ENCODE measurements at regions of chr14 and their contacts with region 1.

Region 1: DNA sequence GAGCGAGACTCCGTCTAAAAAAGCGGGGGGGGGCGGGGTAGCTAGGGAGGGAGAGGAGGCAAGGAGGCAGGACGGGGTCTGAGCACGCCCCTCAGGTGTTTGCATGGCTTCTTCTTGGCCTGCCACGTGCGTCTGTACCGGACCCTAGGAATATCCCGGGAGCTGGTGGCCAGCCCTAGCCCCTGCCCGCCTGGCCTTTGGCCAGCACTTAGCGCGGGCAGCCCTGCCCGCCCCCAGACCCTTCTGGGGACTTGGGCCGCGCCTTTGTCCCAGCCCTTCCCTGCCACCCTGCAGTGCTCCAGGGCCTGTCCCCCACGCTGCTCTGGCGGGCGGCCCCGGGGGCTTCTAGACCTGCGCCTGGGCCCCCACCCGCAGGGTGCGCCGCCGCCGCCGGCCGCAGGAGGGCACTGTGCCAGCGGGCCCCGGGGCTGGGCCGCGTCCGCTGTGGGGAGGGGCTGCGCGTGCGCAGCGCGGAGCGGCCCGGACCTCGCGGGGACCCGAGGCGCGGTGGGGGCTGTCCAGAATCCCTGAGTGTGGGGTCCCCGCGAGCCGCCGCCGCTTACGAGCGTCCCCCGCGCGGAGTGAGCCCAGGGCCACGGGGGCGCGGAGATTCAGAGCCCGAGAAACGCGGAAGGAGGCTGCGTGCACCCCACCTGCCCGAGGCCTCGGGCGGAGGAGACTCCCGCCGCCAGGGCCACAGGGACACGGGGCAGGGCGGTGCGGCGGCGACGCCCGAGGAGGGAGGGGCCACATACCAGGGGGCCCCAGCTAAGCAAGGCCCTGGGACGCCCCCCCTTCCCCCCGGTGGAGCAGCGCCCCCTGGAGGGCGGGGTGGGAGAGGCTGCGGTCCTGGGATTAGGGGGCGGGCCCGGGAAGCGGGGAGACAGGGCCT is 21.0 kb downstream of the SLC25A29 start:
- DNase-seq: peak; percentile 80
- ATAC-seq: peak; percentile 89
- H3K4me3 Mint-ChIP-seq: peak overlapping the region; percentile 78
- H3K27ac Mint-ChIP-seq: peak overlapping the region; percentile 72
- H3K4me1 Mint-ChIP-seq: peaks cover 22% of the 10 kb centered on the region
- H3K27me3 Mint-ChIP-seq: no peaks in the 10 kb centered on the region

Region 2: DNA sequence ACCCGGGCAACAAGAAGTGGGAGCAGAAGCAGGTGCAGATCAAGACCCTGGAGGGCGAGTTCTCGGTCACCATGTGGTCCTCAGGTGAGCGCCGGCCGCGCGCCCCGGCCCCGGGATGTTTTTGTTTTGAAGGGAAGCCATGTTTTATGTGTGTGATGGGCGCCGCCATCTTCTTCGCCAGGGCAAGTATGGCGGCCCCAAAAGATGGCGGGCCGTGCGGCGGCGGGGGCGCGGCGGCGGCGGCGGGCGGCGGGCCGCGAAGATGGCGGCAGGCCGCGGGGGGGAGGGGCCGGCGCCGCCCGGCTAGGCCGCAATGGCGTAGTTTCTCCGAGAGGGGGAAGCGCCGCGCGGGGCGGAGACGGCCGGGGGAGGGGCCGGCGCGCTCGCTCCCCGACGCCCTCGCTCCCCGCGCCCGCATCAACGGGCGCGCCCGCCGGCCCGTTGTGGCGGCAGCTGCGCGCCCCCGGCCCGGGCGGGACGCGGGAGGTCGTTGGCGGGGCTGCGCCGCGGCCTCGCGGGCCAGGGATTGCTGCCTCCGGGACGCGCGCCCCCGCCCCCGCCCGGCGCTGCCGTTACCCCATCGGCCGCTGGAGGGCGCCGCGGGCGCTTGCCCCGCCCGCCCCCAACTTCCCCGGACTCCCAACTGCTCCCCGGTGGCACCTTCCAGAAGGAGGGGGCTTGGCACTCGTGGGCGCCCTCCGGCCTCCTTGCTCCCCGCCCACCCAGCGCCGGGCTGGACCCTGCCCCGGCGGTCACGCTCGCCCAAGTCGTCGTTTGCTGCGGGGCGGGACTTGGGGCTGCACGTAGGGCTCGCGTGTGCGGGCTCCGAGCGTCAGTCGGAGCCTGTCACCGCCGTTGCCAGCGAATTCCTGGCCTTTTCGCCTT is 45.2 kb before region 1 on chr14:
- CTCF ChIA-PET with region 1: interaction called, 13 read pairs
- POLR2A ChIA-PET with region 1: no interaction called
- DNase-seq: peak; percentile 85
- ATAC-seq: peak; percentile 43
- H3K4me3 Mint-ChIP-seq: peak overlapping the region; percentile 93
- H3K27ac Mint-ChIP-seq: peak overlapping the region; percentile 89
- H3K4me1 Mint-ChIP-seq: peaks cover 48% of the 10 kb centered on the region
- H3K27me3 Mint-ChIP-seq: no peaks in the 10 kb centered on the region

Region 3: DNA sequence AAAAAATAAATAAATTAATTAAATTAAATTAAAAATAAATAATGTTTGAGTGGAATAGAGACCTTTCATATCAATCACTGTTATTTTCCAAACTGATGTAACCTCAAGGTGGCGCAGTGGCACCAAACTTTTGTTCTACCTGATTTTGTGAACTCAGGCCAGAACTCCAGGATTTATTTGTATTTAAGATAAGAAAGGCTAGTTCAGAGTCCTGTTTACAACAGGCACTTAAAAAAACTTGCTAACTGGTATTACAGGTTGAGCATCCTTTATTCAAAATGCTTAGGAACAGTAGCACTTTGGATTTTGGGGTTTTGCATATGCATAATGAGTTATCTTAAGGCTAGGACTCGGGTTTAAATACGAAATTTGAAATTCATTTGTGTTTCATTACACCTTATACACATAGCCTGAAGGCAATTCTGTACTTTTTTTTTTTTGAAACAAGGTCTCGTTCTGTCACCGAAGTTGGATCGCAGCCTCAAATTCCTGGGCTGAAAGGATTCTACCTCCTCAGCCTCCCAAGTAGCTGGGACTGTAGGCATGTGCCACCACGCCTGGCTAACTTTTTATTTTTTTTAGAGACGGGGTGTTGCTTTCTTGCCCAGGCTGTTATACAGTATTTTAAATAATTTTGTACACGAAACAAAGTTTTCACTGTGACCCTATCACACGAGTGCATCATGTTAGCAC is 13.9 kb before region 1 on chr14:
- CTCF ChIA-PET with region 1: interaction called, 31 read pairs
- POLR2A ChIA-PET with region 1: no interaction called
- DNase-seq: no peak
- ATAC-seq: no peak
- H3K4me3 Mint-ChIP-seq: no peak overlapping the region
- H3K27ac Mint-ChIP-seq: no peak overlapping the region
- H3K4me1 Mint-ChIP-seq: peaks cover 21% of the 10 kb centered on the region
- H3K27me3 Mint-ChIP-seq: no peaks in the 10 kb centered on the region

Region 4: DNA sequence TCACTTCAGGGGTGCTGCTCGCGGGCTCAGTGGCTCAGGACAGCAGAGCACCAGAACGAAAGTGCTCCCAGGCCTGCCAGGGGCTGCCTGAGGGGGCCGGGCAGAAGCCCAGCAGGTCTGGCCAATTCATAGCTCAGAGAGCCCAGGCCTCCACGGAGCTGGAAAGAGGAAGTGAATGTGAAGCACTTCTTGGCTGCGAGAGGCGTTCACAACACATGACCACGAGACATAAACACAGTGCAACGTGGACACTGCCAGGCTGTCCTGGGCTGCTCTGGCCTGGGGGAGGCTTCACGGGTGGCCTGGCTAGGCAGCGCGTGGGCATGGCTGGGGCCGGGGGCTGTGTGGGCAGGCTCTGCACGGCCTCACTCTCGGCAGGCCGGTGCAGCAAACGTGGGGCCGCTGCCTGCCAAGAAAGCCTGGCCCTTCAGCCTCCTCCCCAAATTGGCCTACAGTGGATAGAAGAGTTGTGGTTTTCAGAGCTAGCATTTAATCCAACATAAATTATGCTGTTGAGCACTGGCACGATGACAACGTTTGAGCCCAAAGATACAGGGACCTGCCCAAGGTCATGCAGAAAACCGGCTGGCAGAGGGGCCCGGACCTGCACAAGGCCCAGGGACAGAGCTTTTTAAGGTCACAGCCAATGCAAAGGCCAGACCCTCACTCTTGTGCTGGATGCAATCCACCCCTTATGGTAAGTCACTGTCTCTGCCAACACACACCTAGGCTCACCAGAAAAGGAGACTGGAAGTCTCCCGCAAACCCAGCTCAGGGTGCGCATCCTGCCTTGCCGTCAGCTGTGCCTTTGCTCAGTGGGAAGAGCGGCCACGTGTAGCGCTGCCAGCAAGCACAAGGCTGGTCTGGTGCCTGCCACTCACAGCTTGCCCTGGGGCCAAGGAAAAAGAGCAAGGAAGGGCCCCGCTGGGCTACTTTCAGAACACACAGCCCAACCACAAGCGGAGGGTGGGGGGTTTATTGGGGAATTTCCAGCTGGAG is 12.3 kb after region 1 on chr14:
- CTCF ChIA-PET with region 1: interaction called, 33 read pairs
- POLR2A ChIA-PET with region 1: interaction called, 3 read pairs
- DNase-seq: no peak
- ATAC-seq: no peak
- H3K4me3 Mint-ChIP-seq: no peak overlapping the region
- H3K27ac Mint-ChIP-seq: no peak overlapping the region
- H3K4me1 Mint-ChIP-seq: peaks cover under 1% of the 10 kb centered on the region
- H3K27me3 Mint-ChIP-seq: no peaks in the 10 kb centered on the region

Region 5: DNA sequence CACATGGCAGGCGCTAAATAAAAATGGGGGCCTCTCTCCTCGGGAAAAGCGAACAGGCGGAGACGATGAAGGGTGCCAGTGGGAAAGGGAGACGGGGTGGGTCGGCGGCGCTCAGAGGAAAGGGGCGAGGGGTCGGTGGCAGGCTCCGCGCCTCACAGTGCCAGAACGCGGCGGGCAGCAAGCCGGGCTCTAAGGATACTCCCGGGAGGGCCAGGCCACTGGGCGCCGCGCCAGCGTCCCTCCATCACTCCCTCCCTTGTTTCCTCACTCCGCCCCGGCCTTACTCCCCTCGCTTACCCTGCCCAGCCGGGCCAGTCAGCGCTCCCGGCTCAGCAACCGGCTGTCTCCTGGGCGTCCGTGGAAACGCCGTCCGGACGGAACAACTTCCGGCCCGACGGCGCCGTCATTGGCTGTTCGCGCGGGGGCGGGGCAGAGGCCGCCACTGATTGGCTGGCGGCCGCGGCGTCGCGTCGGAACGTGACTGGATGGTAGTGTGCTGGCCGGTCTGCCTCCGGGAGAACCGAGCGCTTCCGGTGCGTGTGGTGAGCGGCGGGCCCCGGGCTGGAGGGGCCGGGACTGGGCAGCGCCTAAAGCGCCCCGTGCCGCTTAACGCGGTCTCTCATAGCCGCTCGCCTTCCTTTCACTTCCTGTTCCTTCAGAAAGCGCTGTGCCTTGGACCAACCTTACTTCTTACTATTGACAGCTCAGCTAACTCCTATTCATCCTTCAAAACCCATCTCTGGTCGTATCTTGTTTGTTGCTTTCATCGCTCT is 90.9 kb after region 1 on chr14:
- CTCF ChIA-PET with region 1: interaction called, 21 read pairs
- POLR2A ChIA-PET with region 1: no interaction called
- DNase-seq: peak; percentile 93
- ATAC-seq: peak; percentile 87
- H3K4me3 Mint-ChIP-seq: peak within 1 kb of the TSS; percentile 95
- H3K27ac Mint-ChIP-seq: peak within 1 kb of the TSS; percentile 96
- H3K4me1 Mint-ChIP-seq: peaks cover 50% of the 10 kb centered on the region
- H3K27me3 Mint-ChIP-seq: no peaks in the 10 kb centered on the region

Region 6: GRCh38 chr14:100392356-100392755 is 107.1 kb after region 1 on chr14:
- CTCF ChIA-PET with region 1: no interaction called
- POLR2A ChIA-PET with region 1: no interaction called
- DNase-seq: no peak
- ATAC-seq: no peak
- H3K4me3 Mint-ChIP-seq: no peak overlapping the region
- H3K27ac Mint-ChIP-seq: no peak overlapping the region
- H3K4me1 Mint-ChIP-seq: no peaks in the 10 kb centered on the region
- H3K27me3 Mint-ChIP-seq: no peaks in the 10 kb centered on the region

Measured in activated CD8-positive, alpha-beta T cell treated with anti-CD3 and anti-CD28 coated beads, Interleukin-2, amount 10 ng/mL, durations not matched to agents 7 days and 5 days (primary cell).